Stomach (tissue), 19 donors: ENCODE measurements at regions of chr5 and their contacts with region 1.

Region 1: DNA sequence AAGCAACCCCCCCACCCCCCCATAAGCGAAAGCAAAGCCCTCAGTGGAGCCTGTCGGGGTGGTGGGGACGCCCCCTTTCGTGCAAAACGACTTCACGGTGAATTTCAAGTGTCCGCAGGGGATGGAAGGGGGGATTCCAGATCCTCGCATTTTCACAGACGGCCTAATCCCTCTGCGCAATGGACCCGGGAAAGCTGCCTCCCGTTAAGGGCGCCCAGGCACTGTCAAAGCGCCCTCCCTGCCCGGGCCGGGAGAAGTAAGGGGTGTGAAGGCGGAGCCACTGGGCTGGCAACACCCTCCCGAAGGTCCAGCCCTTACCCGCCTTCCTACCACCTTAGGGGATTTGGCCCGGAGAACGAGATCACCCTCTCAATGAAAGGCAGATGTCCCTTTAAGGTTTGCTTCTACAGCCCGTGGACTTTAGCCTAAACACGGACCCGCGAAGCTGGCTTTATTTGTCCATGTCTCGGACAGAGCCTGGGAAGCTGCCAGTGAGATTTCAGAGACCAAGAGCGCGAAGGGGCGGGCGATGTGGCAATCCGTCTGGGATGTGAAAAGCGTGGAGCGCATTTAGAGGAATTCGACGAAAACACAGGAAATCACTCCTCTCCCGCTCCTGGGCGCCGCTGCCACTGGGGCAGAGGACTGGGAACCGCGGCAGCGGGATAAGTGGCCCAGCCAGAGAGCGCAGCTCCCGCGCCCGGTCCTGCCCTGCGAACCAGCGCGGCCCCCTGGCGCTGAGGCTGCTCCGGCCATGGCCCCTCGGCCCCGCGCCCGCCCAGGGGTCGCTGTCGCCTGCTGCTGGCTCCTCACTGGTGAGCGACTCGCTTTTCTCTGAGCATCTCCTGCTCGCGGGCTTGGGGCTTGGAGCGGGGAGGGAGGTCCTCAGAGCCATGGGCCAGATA is at the starts of genes ITGA1 and PELO:
- DNase-seq: peak; percentile 65 to 90
- H3K4me3 ChIP-seq: peak within 1 kb of the TSS; percentile 66 to 80 (median 74)
- H3K27ac ChIP-seq: peak within 1 kb of the TSS; percentile 87 to 96 (median 92)
- H3K4me1 ChIP-seq: peaks cover 0 to 48% (median 28%) of the 10 kb centered on the region in 4 donors
- H3K27me3 ChIP-seq: no peaks in the 10 kb centered on the region
- CTCF ChIP-seq: peak in 2 of 7 experiments; percentile 28 to 33
- EP300 ChIP-seq: no peak
- POLR2A ChIP-seq: no peak
- total RNA-seq, gene ITGA1: 71.4 to 507 (median 145) TPM
- total RNA-seq, gene PELO: 5.8 to 62.2 (median 12.8) TPM

Region 2: DNA sequence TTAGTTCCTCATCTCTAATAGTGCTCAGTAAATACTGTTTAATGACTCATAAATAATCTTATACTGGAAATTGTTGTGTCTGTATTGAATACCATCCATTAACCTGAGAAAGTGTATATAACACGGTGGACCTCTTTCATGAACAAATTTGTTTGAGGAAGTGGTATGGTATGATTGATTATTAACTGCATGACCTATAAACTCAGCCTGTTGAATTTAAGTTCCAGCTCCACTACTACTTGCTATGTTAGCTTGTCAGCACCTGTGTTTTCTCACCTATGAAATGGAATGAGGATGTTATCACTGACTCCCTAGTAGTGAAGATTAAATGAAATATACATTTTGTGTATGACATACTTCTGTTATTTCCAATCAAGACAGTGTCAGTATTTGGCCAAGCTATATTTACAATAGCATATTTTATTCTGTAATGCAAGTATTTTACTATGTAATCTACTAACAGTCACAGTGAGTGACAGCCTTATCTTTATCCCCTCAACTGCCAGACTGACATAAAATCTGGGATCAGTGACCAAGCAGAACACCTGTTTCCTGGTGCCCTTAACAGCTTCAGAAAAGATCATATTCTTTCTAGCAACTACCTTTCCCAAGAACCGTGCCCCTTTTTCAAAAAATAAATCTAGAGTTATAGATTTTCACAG is 77.4 kb before region 1 on chr5:
- intact Hi-C with region 1: no loop called
- DNase-seq: peak in 1 of 2 donors; percentile 41
- H3K4me3 ChIP-seq: no peak overlapping the region
- H3K27ac ChIP-seq: peak overlapping the region in 4 of 5 donors; percentile 43 to 60 (median 48)
- H3K4me1 ChIP-seq: peaks cover 26 to 59% (median 38%) of the 10 kb centered on the region in 4 donors
- H3K27me3 ChIP-seq: no peaks in the 10 kb centered on the region
- CTCF ChIP-seq: no peak
- EP300 ChIP-seq: no peak
- POLR2A ChIP-seq: no peak

Region 3: GRCh38 chr5:52915176-52915875 is 127.5 kb after region 1 on chr5:
- intact Hi-C with region 1: loop called (anchors 5 kb)
- DNase-seq: peak; percentile 40 to 88
- H3K4me3 ChIP-seq: peak overlapping the region in 3 of 4 donors; percentile 11 to 28 (median 12)
- H3K27ac ChIP-seq: peak overlapping the region in 1 of 5 donors; percentile 56
- H3K4me1 ChIP-seq: peaks cover 0 to 10% (median 5%) of the 10 kb centered on the region in 4 donors
- H3K27me3 ChIP-seq: no peaks in the 10 kb centered on the region
- CTCF ChIP-seq: peak in 5 of 7 experiments; percentile 40 to 81 (median 56)
- EP300 ChIP-seq: no peak
- POLR2A ChIP-seq: no peak